Right ventricle myocardium inferior (tissue), 1 donor: ENCODE measurements at regions of chr15 and their contacts with region 1.

Region 1: DNA sequence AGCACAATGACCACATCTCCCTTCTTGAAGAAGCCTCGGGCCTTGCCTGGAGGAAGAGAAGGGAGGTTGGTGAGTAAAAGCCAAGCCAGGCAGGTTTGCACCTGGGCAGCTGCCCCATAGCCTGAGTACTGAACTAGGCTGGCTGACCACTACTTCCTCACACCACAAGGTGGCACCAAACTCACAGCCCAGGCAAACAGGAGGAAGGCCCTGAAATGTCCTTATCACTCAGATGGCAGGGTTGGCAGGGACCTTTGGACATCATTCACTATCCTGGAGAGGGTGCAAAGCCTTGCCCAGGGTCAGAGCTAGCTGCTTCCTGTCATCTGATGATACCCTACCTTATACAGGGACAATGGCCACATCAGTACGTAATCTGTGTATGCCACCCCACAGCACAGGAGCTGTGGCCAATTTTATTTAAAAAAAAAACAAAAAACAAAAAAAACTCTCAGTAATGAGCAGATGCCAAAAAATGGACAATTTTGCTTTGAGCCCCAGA is 2.2 kb upstream of the GRAMD2A start:
- DNase-seq: peak; percentile 77
- ATAC-seq: peak; percentile 60

Region 2: DNA sequence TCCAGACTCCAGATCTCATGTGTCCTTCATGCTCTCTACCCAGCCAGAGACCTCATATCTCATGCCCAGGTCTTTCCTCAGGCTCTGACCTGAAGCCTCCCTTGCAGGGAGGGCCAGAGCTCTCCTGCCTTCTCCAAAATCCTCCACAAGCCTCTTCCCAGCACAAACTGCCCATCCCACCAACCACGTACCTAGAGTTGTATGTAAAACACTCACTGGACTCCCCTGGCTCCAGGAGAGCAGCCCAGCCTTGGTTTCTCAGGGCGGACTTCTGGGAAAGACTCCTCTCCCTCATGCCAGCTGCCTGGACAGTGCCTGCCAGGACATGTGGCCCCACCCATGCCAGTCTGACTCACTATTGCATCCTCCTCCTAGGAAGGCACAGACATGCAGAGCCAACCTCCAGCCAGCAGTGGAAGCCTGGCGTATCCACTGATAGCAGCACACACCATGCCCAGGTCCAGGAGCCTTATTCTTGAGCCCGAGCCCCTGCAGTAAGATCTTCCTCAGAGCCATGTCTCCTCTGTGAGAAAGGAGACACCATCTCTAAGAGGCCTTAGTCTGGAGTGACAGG is 22.6 kb after region 1 on chr15:
- intact Hi-C with region 1: loop called (anchors 2 kb)
- DNase-seq: peak; percentile 77
- ATAC-seq: peak; percentile 69

Region 3: DNA sequence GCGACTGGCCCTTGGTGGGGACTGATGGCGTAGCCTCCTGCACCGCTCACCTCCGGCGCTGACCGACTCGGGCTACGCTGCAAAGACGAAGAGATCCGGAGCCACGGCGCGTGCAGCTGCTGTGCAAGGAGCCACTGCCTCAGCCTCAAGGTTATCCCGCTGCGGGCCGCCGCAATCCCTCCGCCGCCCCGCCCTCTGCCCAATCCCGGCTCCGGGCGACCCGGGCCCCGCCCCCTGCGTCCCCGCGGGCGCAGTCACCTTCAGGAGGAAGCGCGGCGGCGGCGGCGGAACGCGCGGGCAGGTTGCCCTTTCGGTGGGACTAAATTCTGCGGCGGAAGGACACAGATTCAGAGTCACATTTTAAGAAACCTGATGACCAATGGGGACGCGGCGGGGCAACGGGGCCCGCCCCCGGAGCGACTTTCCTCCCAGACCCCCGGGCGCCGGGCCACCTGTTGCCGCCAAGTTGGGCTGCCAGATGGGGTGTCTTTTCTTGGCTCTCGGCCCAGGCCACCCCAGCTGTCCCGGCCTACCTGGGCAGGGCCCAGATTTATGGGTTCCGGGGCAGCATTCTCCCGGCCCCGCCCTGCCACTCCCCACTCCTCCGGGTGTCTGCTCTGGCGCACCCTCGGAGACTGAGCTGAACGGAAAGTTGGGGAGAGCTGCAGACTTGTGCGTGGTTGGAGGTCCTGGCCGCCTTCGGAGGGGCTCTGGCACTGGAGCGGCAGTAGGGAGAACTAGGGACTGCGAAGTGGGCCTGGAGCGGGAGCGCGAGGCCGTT is 31.5 kb after region 1 on chr15 and contains the start of gene PKM:
- intact Hi-C with region 1: loop called (anchors 1 kb)
- DNase-seq: peak; percentile 98
- ATAC-seq: peak; percentile 93
- total RNA-seq, gene PKM: 1,022 TPM

Region 4: DNA sequence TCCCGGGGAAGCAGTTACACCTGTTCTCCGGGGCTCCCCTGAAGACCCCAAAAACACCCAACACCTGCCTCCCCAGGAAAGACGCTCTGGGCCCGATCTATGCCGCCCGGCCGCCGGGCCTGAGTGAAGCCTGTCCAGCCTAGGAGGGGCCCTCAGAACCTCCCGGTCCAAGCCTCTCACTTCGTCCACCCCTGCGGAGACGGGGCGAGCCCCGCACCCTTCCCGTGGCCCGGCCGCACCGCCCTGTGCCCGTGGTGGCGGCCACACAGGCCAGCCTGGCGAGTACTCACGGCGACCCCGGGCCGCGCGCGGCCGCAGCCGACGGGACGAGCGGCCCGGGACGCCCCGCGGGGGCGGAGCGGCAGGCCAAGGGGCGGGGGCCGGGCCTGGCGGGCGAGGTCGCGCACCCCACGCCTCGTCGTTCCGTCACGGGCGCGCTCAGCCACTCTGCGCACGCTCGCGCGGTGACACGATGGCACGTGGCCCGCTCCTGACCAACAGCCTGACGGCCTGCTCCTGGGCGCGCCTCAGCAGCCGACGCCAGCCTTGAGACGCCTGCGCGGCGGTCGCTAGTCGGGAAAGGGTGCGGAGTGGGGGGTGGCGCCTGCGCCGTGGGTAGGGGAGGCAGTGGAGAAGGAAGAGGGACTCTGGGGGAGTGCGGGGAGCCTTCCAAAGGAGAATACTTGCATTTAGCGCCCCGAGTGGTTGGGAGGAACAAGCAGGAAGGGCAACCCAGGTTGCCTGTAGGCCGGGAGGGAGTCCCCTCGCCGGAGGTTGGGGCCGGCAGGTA is 72.6 kb after region 1 on chr15 and contains the start of gene PARP6:
- intact Hi-C with region 1: loop called (anchors 5 kb)
- DNase-seq: peak; percentile 99
- ATAC-seq: peak; percentile 100
- total RNA-seq, gene PARP6: 46.4 TPM

Region 5: DNA sequence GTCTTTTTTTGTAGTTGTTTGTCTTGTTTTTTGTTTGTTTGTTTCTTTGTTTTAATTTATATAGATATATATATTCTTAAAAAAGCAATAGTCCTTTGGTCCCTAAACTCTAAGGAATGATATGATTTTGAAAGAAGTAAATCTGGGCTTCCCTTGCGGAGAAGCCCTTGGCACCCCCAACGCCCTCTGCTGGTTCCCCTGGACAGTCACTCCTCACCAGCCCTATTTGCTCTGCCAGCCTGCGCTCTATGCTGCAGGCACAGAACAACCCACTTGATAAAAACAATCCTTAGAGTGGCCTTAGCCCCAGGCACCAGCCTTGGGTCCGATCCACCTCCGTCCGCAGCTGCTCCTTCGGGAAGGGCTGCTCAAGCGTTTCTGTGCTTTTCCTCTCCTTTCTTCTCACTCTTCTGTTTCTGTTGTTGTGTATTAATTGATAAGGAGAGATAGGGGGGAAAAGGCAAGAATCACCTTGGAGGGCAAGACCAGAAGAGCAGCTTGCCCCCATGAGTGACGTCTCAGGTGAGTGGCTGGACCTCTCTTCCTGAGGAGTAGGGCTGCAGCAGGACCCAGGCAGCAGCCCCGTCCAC is 86.3 kb after region 1 on chr15:
- intact Hi-C with region 1: loop called (anchors 2 kb)
- DNase-seq: peak; percentile 70
- ATAC-seq: no peak

Region 6: DNA sequence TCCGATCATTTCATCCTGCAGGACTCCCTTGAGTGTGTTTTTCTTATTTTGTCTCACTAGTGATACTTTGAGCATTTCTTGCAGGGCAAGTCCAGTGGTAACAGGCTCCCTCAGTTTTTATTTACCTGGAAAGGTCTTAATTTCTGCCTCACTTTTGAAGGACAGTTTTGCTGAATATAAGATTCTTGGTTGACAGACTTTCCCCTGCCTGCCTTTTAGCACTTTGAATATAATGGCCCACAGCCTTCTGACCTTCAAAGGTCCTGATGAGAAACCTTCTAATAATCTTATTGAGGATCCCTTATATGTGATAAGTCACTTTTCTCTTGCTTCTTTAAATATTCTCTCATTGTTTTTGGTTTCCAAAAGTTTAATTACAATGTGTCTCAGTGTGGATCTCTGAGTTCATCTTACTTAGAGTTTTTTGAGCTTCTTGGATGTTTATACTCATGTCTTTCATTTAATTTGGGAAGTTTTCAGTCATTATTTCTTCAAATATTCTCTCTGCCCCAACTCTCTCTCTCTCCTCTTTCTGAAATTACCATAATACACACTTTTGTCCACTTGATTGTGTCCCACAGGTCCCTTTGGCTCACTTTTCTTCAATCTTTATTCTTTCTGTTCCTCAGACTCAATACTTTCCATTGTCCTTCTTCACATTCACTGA is 238.0 kb after region 1 on chr15:
- intact Hi-C with region 1: no loop called
- DNase-seq: no peak
- ATAC-seq: no peak